Transverse colon (tissue), 4 donors: ENCODE measurements at regions of chr1 and their contacts with region 1.

Region 1: DNA sequence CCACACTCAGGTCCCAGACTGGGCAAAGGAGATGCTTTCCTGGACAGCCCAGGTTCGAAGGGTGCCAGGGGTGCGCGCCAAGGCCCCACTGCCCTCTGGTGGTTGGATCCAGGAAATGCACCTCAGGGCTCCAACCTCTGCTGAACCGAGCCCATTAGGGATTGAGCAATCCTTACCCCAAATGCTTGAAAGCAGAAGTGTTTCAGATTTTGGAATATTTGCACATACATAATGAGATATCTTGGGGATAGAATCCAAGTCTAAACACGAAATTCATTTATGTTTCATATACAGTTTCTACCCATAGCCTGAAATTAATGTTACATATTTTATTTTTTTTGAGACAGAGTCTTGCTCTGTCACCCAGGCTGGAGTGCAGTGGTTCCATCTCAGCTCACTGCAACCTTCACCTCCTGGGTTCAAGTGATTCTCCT is 57.4 kb downstream of the SLC9A1 start:
- DNase-seq: peak; percentile 84
- H3K4me3 ChIP-seq: no peak overlapping the region
- H3K27ac ChIP-seq: no peak overlapping the region
- H3K4me1 ChIP-seq: peaks cover 10 to 27% (median 18%) of the 10 kb centered on the region in 4 donors
- H3K27me3 ChIP-seq: no peaks in the 10 kb centered on the region
- CTCF ChIP-seq: peak; percentile 94 to 97 (median 97)
- EP300 ChIP-seq: no peak
- POLR2A ChIP-seq: no peak

Region 2: DNA sequence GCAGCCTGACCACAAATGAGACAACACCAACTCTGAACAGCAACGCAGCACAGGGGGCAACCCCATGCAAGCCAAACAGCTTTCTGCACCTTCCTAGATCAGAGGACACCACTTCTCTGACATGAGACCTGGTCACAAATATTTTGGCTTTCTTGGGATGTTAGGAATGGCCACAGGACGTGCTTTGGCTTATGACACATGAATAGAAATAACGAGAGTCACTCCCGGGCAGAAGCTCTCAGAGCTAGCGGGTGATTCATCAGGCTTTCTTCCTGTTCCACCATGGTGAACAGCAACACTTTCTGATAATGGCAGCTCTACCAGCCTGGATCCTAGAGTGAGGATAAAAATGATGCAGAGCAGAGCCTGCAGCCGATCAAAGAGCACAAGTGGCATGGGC is 1139.0 kb before region 1 on chr1:
- in situ Hi-C with region 1: no loop called
- intact Hi-C with region 1: no loop called
- DNase-seq: no peak
- H3K4me3 ChIP-seq: no peak overlapping the region
- H3K27ac ChIP-seq: no peak overlapping the region
- H3K4me1 ChIP-seq: no peaks in the 10 kb centered on the region
- H3K27me3 ChIP-seq: no peaks in the 10 kb centered on the region
- CTCF ChIP-seq: no peak
- EP300 ChIP-seq: no peak
- POLR2A ChIP-seq: no peak

Region 3: DNA sequence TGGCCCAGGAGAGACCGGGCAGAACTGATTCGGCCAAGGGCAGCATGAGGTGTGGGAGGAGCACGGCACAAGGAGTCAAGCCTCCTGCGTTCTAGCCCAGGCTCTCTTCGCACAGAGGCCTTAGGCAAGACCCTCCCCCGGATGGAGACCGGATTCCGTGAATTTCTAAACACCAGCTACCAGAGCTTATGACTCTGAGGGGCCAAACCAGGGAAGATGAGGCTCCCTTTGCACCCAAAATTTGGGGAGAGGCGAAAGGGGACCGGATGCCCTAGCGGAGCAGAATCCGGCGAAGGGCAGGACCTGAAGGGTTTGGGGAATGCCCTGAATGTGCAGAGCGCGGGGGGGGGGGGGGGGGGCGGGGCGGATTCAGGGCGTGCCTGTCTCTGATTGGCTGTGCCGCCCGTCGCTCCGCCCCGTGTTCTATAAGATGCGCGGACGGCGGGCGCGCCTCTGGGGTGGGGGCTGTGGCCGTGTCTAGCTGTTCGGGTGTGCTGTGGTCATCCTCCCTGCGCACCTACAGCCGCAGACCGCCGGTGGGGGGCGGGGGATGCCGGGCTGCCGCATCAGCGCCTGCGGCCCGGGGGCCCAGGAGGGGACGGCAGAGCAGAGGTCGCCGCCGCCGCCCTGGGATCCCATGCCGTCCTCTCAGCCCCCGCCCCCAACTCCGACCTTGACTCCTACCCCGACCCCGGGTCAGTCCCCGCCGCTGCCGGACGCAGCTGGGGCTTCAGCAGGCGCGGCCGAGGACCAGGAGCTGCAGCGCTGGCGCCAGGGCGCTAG is 104.1 kb before region 1 on chr1 and contains the start of gene TRNP1:
- in situ Hi-C with region 1: loop called in 1 of 4 experiments (anchors 10 kb)
- intact Hi-C with region 1: loop called (anchors 1 kb)
- DNase-seq: peak; percentile 53
- H3K4me3 ChIP-seq: peak within 1 kb of the TSS; percentile 45 to 90 (median 68)
- H3K27ac ChIP-seq: peak within 1 kb of the TSS; percentile 67 to 83 (median 77)
- H3K4me1 ChIP-seq: peaks cover 5 to 26% (median 17%) of the 10 kb centered on the region in 4 donors
- H3K27me3 ChIP-seq: peaks cover 65% of the 10 kb centered on the region
- CTCF ChIP-seq: no peak
- EP300 ChIP-seq: no peak
- POLR2A ChIP-seq: peak; percentile 38
- total RNA-seq, gene TRNP1: 0.80 to 4.1 (median 2.3) TPM in 3 of 4 donors, not detected in the other